GM12878 (cell line): ENCODE measurements at regions of chr11 and their contacts with region 1.

Region 1: DNA sequence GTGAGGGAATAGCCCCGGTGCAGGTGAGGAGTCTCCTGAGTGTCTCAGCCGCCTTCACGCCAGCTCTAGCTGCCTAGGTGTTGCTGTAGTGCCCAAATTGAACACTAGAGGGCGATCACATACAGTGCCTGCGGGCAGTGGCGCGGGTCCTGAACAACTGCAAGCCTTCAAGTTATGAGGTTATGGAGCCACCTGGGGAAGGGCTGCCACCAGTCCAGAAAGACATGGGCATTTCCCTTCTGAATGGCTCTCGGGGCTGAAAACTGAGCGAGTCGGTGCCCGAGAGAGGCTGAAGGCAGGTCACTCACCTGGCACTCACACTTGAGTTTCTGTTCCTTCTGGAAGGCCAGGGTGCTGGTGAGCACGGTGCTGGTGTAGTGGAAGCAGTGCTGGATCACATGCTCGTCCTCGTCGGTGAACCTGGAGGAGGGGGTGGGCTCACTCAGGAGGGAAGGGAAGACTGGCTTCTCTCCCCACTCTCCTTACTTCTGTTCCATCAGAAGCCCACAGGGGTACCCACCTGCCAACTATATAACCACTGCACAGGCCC is 88.4 kb downstream of the PDE2A start:
- DNase-seq: peak; percentile 12
- ATAC-seq: peak; percentile 93
- H3K4me3 ChIP-seq: no peak overlapping the region
- H3K27ac ChIP-seq: no peak overlapping the region
- H3K4me1 ChIP-seq: no peaks in the 10 kb centered on the region
- H3K27me3 ChIP-seq: peaks cover 10 to 11% of the 10 kb centered on the region in 2 experiments
- CTCF ChIP-seq: peak; percentile 86 to 97 (median 88)
- EP300 ChIP-seq: no peak
- POLR2A ChIP-seq: no peak
- RAD21 ChIP-seq: peak; percentile 81

Region 2: DNA sequence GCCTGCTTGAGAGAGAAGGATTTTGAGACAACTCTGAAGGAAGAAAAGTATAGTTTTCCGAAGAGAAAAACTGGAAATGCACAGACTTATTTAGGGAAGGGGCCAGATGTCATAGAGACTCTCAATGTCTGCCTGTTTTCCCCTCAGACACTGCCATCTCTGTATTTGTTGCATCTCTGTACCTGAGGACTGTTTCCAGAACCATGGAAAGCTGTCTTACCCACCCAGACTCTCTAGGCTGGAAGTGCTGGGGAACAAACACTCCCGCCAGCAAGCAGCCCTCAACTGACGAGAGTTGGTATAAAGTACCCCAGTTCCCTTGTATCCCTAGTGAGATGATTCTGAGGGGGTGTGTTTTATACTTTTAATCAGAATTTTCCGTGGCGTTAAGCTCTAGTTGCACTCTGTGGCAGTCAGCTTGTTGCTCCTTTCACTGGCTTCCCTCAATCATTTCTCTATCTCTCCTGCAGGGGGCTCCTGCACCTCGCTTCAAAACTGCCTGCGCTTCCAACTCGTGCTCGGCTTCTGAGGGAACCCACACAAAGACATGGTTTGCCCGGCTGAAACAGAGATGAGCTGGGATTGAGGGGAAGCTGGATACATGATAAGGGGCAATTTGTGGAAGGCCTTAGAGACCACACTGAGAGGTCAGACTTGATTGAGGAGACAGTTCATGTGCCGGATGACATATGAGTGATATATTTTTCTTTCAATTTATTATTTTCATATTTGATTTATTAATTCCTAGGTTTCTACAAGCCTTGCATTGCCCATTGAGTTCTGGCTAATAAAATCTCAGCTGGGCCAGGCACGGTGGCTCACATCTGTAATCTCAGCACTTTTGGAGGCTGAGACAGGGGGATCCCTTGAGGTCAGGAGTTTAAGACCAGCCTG is 114.6 kb before region 1 on chr11:
- CTCF ChIA-PET with region 1: interaction called, 16 read pairs
- POLR2A ChIA-PET with region 1: no interaction called
- RAD21 ChIA-PET with region 1: interaction called, 8 read pairs
- SMC1A ChIA-PET with region 1: interaction called, 9 read pairs
- in situ Hi-C with region 1: no loop called
- intact Hi-C with region 1: no loop called
- DNase-seq: no peak
- ATAC-seq: peak; percentile 93
- H3K4me3 ChIP-seq: no peak overlapping the region
- H3K27ac ChIP-seq: no peak overlapping the region
- H3K4me1 ChIP-seq: no peaks in the 10 kb centered on the region
- H3K27me3 ChIP-seq: peaks cover 0 to 8% of the 10 kb centered on the region in 2 experiments; a peak in 1 of 4 replicates
- CTCF ChIP-seq: peak; percentile 83 to 86 (median 85)
- EP300 ChIP-seq: no peak
- POLR2A ChIP-seq: no peak
- RAD21 ChIP-seq: peak; percentile 71

Region 3: DNA sequence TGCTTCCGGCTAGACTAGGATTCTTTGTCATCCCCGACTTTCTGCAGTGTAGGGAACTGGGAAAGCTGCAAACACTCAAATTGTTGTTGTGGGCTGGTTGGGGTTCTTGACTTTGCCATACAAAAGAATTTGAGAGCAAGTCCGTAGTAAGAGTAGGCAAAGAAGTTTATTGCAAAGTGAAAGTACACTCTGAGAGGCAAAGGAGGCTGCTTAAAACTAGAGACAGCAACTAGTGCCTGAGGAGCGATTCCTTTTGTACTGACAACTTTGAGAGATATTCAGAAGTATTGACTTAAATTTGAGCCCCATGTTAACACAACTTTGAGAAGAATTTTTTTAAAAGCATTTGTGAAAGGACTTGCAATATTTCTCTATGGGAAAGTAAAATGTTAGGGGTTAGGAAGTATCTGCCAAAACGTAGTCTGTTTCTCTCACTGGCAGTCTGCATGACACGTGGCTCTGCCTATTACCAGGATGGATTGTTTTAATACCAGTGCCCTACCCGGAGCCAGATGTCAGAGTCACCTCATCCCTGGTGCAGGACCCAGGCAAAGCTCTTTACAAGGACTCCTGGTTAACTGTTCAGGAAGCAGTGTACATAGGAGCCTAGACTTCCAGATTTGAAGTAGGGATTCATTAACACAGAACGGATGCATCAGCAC is 66.5 kb before region 1 on chr11:
- CTCF ChIA-PET with region 1: no interaction called
- POLR2A ChIA-PET with region 1: no interaction called
- RAD21 ChIA-PET with region 1: no interaction called
- SMC1A ChIA-PET with region 1: no interaction called
- in situ Hi-C with region 1: no loop called
- intact Hi-C with region 1: no loop called
- DNase-seq: no peak
- ATAC-seq: peak; percentile 61
- H3K4me3 ChIP-seq: peak overlapping the region; percentile 29; the same call in 1 of the 2 replicates
- H3K27ac ChIP-seq: no peak overlapping the region
- H3K4me1 ChIP-seq: no peaks in the 10 kb centered on the region
- H3K27me3 ChIP-seq: no peaks in the 10 kb centered on the region
- CTCF ChIP-seq: no peak
- EP300 ChIP-seq: no peak
- POLR2A ChIP-seq: no peak
- RAD21 ChIP-seq: no peak

Region 4: DNA sequence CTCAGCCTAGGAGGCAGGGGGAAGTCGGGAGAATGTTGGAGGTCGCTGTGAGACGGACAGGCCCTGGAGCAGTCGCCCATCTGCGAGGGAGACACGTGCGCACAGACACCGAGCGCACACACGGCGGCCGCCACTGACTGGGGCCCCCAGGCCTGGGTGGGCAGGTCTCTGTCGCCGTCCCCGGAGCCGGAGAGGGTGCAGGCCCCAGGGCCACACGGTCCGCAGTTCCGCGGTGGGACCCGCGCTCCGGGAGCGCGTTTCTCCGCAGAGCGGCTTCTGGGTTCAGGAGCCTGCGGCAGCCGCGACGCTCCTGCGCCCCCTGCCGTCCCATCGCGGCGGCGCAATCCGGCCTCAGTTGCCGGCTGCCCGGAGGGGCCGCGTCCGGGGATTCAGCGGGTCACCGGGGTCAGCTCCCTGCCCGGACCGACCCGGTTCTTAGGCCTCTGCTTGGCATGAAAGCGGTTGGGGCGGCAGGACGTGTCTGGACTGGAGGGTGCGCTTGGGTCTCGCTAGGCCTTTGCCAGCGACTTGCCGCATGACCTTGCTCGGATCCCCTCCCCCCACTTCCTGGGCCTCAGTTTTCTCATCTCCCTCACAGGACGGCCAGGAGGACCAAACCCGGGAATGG is 57.2 kb after region 1 on chr11:
- CTCF ChIA-PET with region 1: interaction called, 16 read pairs
- POLR2A ChIA-PET with region 1: no interaction called
- RAD21 ChIA-PET with region 1: interaction called, 12 read pairs
- SMC1A ChIA-PET with region 1: interaction called, 7 read pairs
- in situ Hi-C with region 1: loop called (anchors 5 kb)
- intact Hi-C with region 1: loop called (anchors 1 kb)
- DNase-seq: no peak
- ATAC-seq: peak; percentile 91
- H3K4me3 ChIP-seq: no peak overlapping the region
- H3K27ac ChIP-seq: no peak overlapping the region
- H3K4me1 ChIP-seq: no peaks in the 10 kb centered on the region
- H3K27me3 ChIP-seq: peaks cover 6 to 11% of the 10 kb centered on the region in 2 experiments; a peak in 3 of 4 replicates
- CTCF ChIP-seq: peak; percentile 84 to 89 (median 88)
- EP300 ChIP-seq: no peak
- POLR2A ChIP-seq: no peak
- RAD21 ChIP-seq: peak; percentile 69

Region 5: DNA sequence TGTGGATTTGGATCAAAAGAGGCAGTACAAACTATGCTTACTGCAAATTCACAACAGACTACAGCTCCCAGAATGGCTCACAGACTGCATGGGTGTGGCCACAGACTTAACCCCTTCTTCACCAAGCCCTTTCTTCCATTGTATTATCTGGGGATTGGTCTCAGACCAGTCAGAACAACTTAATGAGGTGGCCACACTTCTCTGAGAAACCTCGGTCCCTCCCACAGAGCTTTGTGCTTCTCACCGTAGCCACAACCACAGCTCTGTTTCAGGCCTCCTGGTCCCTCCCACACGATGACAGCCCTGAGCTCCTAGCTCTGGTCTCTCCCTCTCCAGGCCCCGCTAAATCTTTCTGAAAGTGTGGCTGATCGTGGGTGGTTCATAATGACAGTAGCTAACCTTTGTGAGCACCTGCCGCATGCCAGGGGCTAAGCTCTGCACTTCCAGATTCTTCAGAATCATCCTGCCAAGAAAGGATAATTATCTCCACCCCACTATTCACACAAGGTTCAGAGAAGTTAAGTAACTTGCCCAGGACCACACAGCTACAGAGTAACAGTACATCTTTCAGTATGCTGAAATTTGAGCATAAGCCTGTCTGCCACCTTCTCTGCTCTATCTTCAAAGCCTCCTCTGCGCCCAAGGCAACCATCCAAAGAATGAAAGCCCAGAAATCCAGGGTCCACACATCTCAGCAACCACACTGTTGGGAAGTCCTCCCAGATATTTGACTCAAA is 82.9 kb after region 1 on chr11:
- CTCF ChIA-PET with region 1: interaction called, 20 read pairs
- POLR2A ChIA-PET with region 1: no interaction called
- RAD21 ChIA-PET with region 1: no interaction called
- SMC1A ChIA-PET with region 1: interaction called, 5 read pairs
- in situ Hi-C with region 1: no loop called
- intact Hi-C with region 1: no loop called
- DNase-seq: peak; percentile 94
- ATAC-seq: peak; percentile 97
- H3K4me3 ChIP-seq: no peak overlapping the region
- H3K27ac ChIP-seq: peak overlapping the region; percentile 53
- H3K4me1 ChIP-seq: peaks cover 25% of the 10 kb centered on the region
- H3K27me3 ChIP-seq: peaks cover 0 to under 1% of the 10 kb centered on the region in 2 experiments; a peak in 3 of 4 replicates
- CTCF ChIP-seq: no peak
- EP300 ChIP-seq: peak in 1 of 2 experiments; percentile 36; a peak in 1 of 4 replicates
- POLR2A ChIP-seq: no peak
- RAD21 ChIP-seq: no peak

Region 6: DNA sequence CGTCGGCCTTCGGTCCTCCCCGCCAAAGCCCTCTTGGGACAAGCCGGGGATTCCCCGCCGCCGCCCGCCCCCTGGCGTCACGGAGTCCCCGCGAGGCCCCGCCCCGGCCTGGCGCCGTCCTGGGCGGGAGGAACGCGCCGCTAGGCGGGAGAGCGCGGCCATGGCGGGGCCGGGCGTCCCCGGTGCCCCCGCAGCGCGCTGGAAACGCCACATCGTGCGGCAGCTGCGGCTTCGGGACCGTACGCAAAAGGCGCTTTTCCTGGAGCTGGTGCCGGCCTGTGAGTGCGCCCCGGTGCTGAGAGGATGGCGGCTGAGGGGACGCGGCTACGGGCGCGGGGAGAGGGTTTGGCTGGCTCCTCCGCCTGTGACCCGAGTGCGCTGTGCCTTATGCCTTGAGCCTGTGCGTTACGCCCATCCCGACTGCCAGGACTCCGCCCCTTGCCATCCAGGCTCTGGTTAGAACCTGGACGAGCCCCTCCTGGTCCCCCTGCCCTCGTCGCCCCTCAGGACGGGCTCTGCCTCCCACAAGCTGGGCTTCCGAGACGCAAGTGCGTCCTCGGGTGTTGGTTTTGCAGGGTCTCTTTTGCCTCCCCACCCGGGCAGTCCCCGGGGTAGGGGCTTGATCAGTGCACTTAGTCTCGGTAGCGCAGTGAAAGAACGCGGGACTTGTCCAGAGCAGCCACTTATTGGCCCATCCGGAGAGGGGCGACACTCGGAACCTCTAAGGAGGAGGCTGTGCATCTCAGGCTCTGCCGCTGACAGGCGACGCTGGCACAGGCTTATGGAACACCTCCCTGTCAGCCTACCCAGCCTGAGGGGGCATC is 228.7 kb after region 1 on chr11 and contains the start of gene ATG16L2:
- CTCF ChIA-PET with region 1: no interaction called
- POLR2A ChIA-PET with region 1: no interaction called
- RAD21 ChIA-PET with region 1: no interaction called
- SMC1A ChIA-PET with region 1: no interaction called
- in situ Hi-C with region 1: no loop called
- intact Hi-C with region 1: loop called (anchors 10 kb)
- DNase-seq: no peak
- ATAC-seq: peak; percentile 74
- H3K4me3 ChIP-seq: peak within 1 kb of the TSS; percentile 89
- H3K27ac ChIP-seq: peak within 1 kb of the TSS; percentile 98
- H3K4me1 ChIP-seq: peaks cover 7% of the 10 kb centered on the region; the same call in 1 of the 2 replicates
- H3K27me3 ChIP-seq: no peaks in the 10 kb centered on the region
- CTCF ChIP-seq: peak in 2 of 3 experiments; percentile 15 to 19; a peak in 1 of 6 replicates
- EP300 ChIP-seq: 0 out of 4 replicates have a peak, but pooled peaks of 1 of the 2 experiments have one; percentile 3
- POLR2A ChIP-seq: peak; percentile 81
- RAD21 ChIP-seq: 0 out of 2 replicates have a peak, but pooled peaks have one; percentile 20
- polyA plus RNA-seq, gene ATG16L2: 1.9 to 5.3 TPM